ENCODE measurements at regions of chr5 and their contacts with region 1.

Region 1: DNA sequence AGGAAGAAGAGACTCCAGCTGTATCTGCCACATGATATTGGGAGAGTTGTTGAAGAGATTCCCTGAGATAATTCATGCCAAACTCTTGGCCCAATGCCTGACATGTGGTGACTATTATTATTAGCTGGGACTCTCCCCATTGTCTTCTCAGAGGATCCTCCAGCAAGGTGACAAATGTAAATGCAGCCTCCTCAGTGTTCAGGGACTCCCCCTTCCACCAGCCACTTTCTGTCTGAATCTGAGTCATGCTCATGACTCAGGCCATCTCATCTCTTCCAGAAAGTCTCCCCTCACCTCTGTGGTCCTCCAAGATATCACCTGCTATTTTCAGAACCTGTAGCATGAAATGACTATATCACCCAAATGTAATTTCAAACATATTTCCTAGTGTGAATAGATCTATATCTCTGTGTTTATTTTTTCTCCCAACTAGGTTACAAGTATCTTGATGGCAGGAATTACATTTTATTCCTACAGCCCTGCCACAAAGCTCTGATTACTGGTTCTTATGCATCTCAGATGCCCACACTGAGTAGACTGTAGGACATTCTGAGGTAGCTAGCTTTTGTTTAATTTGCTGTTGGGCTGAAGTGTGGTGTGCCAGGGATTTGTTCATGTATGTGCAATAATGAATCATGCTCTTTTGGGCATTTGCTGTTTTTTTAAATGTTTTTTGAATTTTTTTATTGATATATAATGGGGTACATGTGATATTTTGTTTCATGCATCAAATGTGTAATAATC is 126.6 kb upstream of the IL12B start:
- DNase-seq: peak; percentile 82
- ATAC-seq: peak; percentile 84
- H3K4me3 Mint-ChIP-seq: no peak overlapping the region
- H3K27ac Mint-ChIP-seq: no peak overlapping the region
- H3K4me1 Mint-ChIP-seq: peaks cover 45% of the 10 kb centered on the region
- H3K27me3 Mint-ChIP-seq: peaks cover 37% of the 10 kb centered on the region

Region 2: DNA sequence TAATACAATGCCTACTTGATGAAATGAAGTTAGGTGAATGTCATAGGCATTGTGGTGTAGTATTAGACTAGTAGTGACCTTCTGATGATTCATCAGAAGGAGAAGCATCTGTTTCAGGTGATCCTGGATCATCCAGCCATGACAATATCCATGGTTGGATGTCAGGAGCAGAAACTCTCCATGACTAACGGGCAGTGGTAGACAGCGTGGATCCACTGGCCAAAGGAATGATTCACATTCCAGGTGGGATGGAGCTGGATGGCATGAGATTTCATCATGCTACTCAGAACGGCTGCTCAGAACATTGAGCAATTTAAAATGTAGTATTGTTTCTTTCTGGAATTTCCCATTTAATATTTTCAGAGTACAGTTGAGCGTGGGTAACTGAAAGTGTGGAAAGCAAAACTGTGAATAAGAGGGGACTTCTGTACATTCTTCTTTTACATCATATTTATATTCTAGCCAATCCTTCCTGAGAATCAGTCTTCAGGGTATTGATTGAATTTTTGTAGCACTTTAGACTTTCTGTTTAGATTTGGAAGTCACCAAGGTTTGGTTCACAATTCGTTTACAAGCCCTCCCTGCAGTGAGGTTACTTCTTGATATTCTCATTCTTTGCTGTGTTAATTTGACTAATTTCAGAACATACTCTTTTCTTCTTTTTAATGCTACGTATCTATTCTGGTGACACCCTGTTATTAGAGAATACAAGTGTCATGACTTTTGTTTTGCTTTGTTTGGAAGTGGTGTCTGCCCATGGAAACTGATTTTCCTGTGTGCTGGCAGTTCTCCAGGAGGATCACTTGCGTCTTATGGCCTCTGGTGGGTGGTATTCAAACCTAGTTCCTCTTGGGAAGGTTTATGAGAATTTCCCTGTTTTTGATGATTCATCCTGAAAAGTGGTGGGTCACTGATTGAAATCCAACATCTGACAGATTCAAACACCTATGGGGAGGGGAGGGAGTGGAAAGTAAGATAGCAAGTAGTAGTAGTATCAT is 1585.8 kb before region 1 on chr5:
- CTCF ChIA-PET with region 1: no interaction called
- POLR2A ChIA-PET with region 1: no interaction called
- intact Hi-C with region 1: loop called in 1 of 2 experiments (anchors 5 kb)
- DNase-seq: no peak
- ATAC-seq: peak; percentile 60
- H3K4me3 Mint-ChIP-seq: no peak overlapping the region
- H3K27ac Mint-ChIP-seq: peak overlapping the region; percentile 26
- H3K4me1 Mint-ChIP-seq: peaks cover 16% of the 10 kb centered on the region
- H3K27me3 Mint-ChIP-seq: no peaks in the 10 kb centered on the region

Region 3: GRCh38 chr5:159163027-159163700 is 293.7 kb before region 1 on chr5:
- CTCF ChIA-PET with region 1: interaction called, 3 read pairs
- POLR2A ChIA-PET with region 1: no interaction called
- intact Hi-C with region 1: loop called (anchors 1 to 2 kb)
- DNase-seq: peak; percentile 38
- ATAC-seq: peak; percentile 96
- H3K4me3 Mint-ChIP-seq: no peak overlapping the region
- H3K27ac Mint-ChIP-seq: peak overlapping the region; percentile 82
- H3K4me1 Mint-ChIP-seq: peaks cover 48% of the 10 kb centered on the region
- H3K27me3 Mint-ChIP-seq: no peaks in the 10 kb centered on the region

Region 4: DNA sequence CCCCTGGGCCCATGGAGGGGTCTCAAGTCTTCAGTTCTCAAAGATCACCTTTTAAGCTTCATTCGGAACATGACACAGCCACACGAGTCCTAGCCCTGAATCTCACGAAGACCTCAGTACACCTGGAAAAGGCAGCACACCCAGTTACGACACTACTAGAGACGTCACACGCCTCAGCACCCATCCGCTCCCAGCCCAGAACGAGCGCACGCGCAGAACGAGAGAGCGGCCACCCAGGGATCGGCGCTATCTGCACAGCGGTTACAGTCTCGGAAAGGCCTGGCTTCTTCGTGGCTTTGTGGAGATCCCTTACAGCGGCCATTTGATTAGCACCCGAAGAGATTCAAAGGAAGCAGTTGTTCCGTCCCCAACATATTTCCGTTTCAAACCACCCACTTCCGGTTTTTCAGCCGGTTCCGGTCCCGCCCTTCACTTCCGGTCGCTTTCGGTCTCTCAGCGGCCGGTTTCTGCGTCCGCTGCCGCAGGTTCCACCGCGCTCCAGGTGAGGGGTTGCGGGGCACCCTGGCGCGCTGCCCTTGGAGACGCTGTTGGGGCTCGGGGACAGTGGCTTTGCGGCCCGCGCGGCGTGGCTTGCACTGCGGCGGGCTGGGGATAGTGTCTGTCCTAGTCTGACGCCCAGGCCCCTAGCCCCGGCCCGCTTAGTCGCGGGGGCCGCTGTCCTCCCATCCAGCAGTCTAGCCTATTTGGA is 193.9 kb before region 1 on chr5 and contains the start of gene UBLCP1:
- CTCF ChIA-PET with region 1: no interaction called
- POLR2A ChIA-PET with region 1: no interaction called
- intact Hi-C with region 1: loop called in 1 of 2 experiments (anchors 1 kb)
- DNase-seq: peak; percentile 85
- ATAC-seq: peak; percentile 92
- H3K4me3 Mint-ChIP-seq: peak within 1 kb of the TSS; percentile 89
- H3K27ac Mint-ChIP-seq: peak within 1 kb of the TSS; percentile 100
- H3K4me1 Mint-ChIP-seq: peaks cover 49% of the 10 kb centered on the region
- H3K27me3 Mint-ChIP-seq: no peaks in the 10 kb centered on the region
- total RNA-seq, gene UBLCP1: 26.0 to 31.0 TPM

Region 5: GRCh38 chr5:159515909-159516415 is 59.1 kb after region 1 on chr5:
- CTCF ChIA-PET with region 1: no interaction called
- POLR2A ChIA-PET with region 1: no interaction called
- intact Hi-C with region 1: loop called in 1 of 2 experiments (anchors 5 kb)
- DNase-seq: peak; percentile 89
- ATAC-seq: peak; percentile 98
- H3K4me3 Mint-ChIP-seq: no peak overlapping the region
- H3K27ac Mint-ChIP-seq: no peak overlapping the region
- H3K4me1 Mint-ChIP-seq: peaks cover 9% of the 10 kb centered on the region
- H3K27me3 Mint-ChIP-seq: peaks cover 10% of the 10 kb centered on the region

Region 6: GRCh38 chr5:160539431-160539830 is 1082.5 kb after region 1 on chr5:
- CTCF ChIA-PET with region 1: no interaction called
- POLR2A ChIA-PET with region 1: no interaction called
- intact Hi-C with region 1: loop called in 1 of 2 experiments (anchors 2 kb)
- DNase-seq: peak; percentile 82
- ATAC-seq: peak; percentile 95
- H3K4me3 Mint-ChIP-seq: no peak overlapping the region
- H3K27ac Mint-ChIP-seq: no peak overlapping the region
- H3K4me1 Mint-ChIP-seq: peaks cover 25% of the 10 kb centered on the region
- H3K27me3 Mint-ChIP-seq: peaks cover 3% of the 10 kb centered on the region